PC-3 (cell line): ENCODE measurements at regions of chr20 and their contacts with region 1.

Region 1: GRCh38 chr20:56343861-56344381 is 14.9 kb upstream of the FAM210B start:
- DNase-seq: peak; percentile 61
- ATAC-seq: peak; percentile 94
- H3K4me3 ChIP-seq: 0 out of 2 replicates have a peak overlapping the region, but pooled peaks have one; percentile 33
- H3K27ac ChIP-seq: no peak overlapping the region
- H3K4me1 ChIP-seq: no peaks in the 10 kb centered on the region
- H3K27me3 ChIP-seq: peaks cover 32% of the 10 kb centered on the region
- CTCF ChIP-seq: peak; percentile 96

Region 2: GRCh38 chr20:56202493-56203077 is 141.3 kb before region 1 on chr20:
- CTCF ChIA-PET with region 1: no interaction called
- POLR2A ChIA-PET with region 1: no interaction called
- intact Hi-C with region 1: loop called (anchors 2 kb)
- DNase-seq: peak; percentile 64
- ATAC-seq: peak; percentile 53
- H3K4me3 ChIP-seq: no peak overlapping the region
- H3K27ac ChIP-seq: no peak overlapping the region
- H3K4me1 ChIP-seq: no peaks in the 10 kb centered on the region
- H3K27me3 ChIP-seq: peaks cover 12% of the 10 kb centered on the region; the same call in 1 of the 2 replicates
- CTCF ChIP-seq: peak; percentile 78

Region 3: GRCh38 chr20:56247948-56248782 is 95.8 kb before region 1 on chr20 and contains the start of gene MC3R:
- CTCF ChIA-PET with region 1: no interaction called
- POLR2A ChIA-PET with region 1: no interaction called
- intact Hi-C with region 1: loop called (anchors 1 kb)
- DNase-seq: peak; percentile 79
- ATAC-seq: peak; percentile 99
- H3K4me3 ChIP-seq: no peak within 1 kb of the TSS
- H3K27ac ChIP-seq: no peak within 1 kb of the TSS
- H3K4me1 ChIP-seq: no peaks in the 10 kb centered on the region
- H3K27me3 ChIP-seq: peaks cover 41% of the 10 kb centered on the region
- CTCF ChIP-seq: peak; percentile 98
- total RNA-seq, gene MC3R: not detected in 2 replicates

Region 4: DNA sequence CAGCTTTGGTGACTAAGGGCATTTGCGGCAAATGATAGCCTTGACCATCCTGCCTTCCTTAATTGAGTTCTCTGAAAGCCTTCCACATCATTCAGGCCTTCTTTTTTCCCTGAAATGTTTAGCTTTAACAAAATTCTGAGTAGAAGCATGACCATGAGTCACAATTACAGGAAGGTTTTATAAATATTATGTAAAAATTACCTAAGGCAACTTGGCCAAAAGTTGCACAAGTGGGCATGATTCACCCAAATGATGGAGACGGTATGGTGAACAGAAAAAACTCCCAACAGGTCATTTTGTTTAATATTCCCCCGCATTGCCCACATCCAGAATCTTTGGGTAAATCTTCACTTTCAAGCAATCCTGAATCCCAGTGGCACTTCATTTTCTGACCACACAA is 58.4 kb before region 1 on chr20:
- CTCF ChIA-PET with region 1: no interaction called
- POLR2A ChIA-PET with region 1: no interaction called
- intact Hi-C with region 1: no loop called
- DNase-seq: no peak
- ATAC-seq: no peak
- H3K4me3 ChIP-seq: no peak overlapping the region
- H3K27ac ChIP-seq: no peak overlapping the region
- H3K4me1 ChIP-seq: no peaks in the 10 kb centered on the region
- H3K27me3 ChIP-seq: peaks cover 21% of the 10 kb centered on the region; the same call in 1 of the 2 replicates
- CTCF ChIP-seq: no peak

Region 5: DNA sequence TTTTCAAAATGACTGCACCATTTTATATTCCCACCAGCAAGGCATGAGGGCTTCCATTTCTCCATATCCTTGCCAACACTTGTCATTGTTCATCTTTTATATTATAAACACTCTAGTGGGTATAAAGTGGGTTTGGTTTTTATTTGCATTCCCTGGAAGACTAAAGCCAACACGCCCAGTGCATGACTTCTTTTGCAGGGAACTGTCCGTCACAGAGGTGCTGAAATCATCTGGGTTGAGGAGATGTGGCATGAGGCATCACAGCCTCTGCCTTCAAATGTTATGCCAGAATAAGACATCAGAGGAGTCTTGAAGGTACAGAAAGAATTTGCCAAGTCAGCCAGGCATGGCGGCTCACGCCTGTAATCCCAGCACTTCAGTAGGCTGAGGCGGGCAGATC is 15.1 kb before region 1 on chr20:
- CTCF ChIA-PET with region 1: no interaction called
- POLR2A ChIA-PET with region 1: no interaction called
- intact Hi-C with region 1: no loop called
- DNase-seq: peak; percentile 57
- ATAC-seq: no peak
- H3K4me3 ChIP-seq: no peak overlapping the region
- H3K27ac ChIP-seq: no peak overlapping the region
- H3K4me1 ChIP-seq: no peaks in the 10 kb centered on the region
- H3K27me3 ChIP-seq: peaks cover 24% of the 10 kb centered on the region; the same call in 1 of the 2 replicates
- CTCF ChIP-seq: no peak

Region 6: DNA sequence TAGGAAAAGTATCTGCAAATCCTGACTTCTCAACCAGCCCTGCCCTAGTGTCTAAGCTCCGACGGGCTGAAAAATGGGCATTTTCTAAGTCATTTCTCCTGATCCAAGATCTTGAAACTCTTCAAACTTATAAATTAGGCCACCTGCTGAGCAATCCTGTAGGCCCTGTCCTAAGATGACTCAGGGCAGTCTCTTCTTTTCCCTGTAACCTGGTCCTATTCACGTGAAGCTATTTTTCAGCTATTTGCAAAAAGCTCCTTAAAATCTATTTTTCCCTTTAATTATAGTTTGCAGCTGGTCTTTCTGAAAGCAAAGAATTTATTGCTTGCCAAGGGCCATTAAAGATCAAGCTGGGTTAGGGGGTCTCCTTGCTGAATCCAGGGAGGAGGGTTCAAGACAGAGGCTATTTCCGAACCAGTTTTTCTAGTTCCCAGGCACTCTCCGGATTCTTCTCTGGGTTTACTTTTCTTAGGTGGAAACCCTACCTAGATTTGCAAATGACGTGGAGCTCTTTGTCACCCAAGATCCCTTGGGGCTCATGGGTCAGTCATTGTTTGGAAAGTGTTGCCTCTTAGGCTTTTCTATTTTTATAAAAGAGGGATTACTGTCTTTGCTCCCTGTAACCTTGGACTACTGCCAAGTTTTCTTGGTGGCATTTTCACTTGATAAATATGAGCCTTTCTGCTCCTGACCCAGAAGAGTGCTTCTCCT is 222.5 kb after region 1 on chr20:
- CTCF ChIA-PET with region 1: no interaction called
- POLR2A ChIA-PET with region 1: no interaction called
- intact Hi-C with region 1: no loop called
- DNase-seq: peak; percentile 93
- ATAC-seq: peak; percentile 56
- H3K4me3 ChIP-seq: no peak overlapping the region
- H3K27ac ChIP-seq: peak overlapping the region; percentile 71
- H3K4me1 ChIP-seq: peaks cover 13% of the 10 kb centered on the region
- H3K27me3 ChIP-seq: no peaks in the 10 kb centered on the region
- CTCF ChIP-seq: no peak

Region 7: DNA sequence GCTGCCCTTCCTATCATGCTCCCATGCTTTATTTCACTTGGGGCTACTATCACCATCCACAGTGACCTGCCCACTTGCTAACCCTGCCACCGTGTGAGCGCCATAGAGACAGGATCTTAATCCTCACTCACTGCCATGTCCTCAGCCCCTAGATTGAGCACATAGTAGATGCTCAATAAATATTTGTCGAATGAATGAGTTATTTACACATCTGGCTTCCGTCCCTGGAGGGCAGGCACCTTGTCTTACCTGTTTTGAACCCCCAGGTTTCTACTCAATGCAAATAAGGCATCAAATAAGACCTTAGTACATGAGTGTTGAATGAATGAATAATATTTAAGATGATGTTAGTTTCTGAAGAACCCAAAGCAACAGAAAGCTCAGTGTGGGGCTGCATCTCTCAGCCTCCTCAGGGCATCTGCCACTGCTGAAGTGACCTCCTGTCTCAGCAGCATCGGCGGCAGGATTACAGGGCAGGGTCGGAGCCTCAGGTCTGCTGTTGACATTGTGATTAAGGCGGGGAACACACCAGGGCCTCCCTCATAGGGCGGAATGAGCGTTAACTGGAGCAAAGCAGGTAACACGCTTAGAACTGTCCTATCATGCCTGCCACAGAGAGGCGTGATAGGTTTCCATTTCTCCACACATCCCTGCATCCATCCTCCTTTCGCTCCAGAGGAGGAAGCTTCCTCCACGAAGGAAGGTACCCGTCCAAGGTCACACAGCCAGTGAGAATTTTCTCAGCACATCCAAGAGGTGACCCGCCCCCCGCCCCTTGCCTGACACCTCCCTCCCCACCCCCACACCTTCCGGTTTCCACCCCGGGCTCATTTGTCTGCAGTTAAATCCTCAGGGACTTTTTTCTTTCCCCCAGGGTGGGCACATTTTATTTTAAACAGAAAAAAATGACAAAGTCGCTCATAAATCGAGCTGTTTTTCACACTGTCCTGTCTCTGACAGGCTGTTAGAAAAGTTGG is 485.8 kb after region 1 on chr20:
- CTCF ChIA-PET with region 1: no interaction called
- POLR2A ChIA-PET with region 1: no interaction called
- intact Hi-C with region 1: no loop called
- DNase-seq: peak; percentile 60
- ATAC-seq: peak; percentile 54
- H3K4me3 ChIP-seq: no peak overlapping the region
- H3K27ac ChIP-seq: no peak overlapping the region
- H3K4me1 ChIP-seq: peaks cover 16% of the 10 kb centered on the region; the same call in 1 of the 2 replicates
- H3K27me3 ChIP-seq: no peaks in the 10 kb centered on the region
- CTCF ChIP-seq: no peak